Endothelial cell of umbilical vein (primary cell): ENCODE measurements at regions of chr2 and their contacts with region 1.

Region 1: GRCh38 chr2:224401641-224402342 is at the start of gene FAM124B:
- DNase-seq: peak; percentile 99
- H3K4me3 ChIP-seq: peak within 1 kb of the TSS; percentile 33 to 90 (median 75)
- H3K27ac ChIP-seq: peak within 1 kb of the TSS; percentile 98
- H3K4me1 ChIP-seq: peaks cover 28% of the 10 kb centered on the region
- H3K27me3 ChIP-seq: no peaks in the 10 kb centered on the region
- CTCF ChIP-seq: no peak
- POLR2A ChIP-seq: peak; percentile 96
- total RNA-seq, gene FAM124B: 81.4 and 82.0 TPM in 2 replicates

Region 2: DNA sequence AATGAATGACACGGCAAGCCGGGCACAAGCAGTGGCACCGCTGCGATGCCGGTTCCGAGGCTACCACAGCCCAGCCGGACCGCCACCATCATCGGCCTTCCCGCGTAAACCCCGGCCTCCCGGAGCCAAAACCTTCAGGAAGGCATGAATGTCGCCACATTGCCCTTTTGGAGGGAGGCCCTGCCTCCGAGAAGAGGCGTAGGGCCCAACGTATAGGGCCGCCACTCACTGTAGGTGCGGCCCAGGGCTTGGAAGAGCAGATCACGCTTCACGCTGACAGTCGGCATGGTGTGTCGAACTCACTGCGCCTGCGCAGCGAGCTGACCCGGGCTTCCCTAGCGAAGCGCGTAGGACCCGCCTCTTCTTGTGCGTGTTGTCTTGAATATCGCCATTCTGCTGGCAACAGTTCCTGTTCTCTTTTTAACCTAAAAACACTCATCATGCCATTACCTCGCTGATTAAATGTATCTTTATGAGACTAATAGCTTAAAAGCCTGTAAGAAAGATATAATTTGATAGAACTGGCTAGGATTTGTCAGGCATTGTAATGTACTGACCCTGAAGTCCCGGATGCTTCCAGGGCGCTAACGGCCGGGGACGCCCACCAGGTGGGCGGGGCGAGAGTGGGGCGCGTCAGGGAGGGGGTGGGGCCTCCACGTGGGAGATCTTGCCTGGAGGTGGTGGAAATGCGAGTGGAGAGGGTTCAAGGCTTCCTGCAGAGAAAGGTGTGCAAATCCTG is 1745.8 kb before region 1 on chr2 and contains the start of gene FARSB:
- CTCF ChIA-PET with region 1: no interaction called
- POLR2A ChIA-PET with region 1: no interaction called
- dilution Hi-C with region 1: no loop called
- intact Hi-C with region 1: loop called (anchors 10 kb)
- DNase-seq: peak; percentile 97
- H3K4me3 ChIP-seq: peak within 1 kb of the TSS; percentile 47 to 95 (median 92)
- H3K27ac ChIP-seq: peak within 1 kb of the TSS; percentile 99
- H3K4me1 ChIP-seq: peaks cover 34% of the 10 kb centered on the region
- H3K27me3 ChIP-seq: no peaks in the 10 kb centered on the region
- CTCF ChIP-seq: no peak
- POLR2A ChIP-seq: peak; percentile 64
- total RNA-seq, gene FARSB: 27.2 and 29.4 TPM in 2 replicates

Region 3: DNA sequence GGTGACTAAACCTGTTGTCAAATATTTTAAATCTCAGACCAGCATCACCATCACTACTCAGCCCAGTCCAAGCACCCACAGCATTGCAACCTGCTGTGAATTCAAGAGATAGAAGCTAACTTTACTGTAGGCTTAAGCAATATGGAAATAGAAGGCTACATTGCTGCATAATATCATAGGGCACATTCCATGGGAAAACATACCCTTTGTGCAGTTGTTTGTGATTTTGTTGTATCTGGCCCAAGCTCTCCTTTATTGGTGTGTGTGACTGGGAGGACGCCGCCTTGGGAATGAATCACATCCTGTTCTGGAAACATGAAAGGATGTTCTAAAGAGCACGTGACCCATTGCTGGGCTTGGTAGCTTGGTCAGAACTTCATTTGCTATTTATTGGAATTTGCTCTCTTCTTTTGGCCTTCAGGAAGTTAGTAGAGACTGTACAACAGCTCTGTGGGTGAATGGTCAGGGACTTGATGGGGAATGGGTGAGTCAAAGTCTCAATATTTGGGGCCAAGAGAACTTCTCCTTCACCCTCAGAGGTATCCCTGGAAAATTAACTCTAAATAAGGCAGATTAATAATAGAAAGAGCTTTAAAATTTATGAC is 255.9 kb before region 1 on chr2:
- CTCF ChIA-PET with region 1: no interaction called
- POLR2A ChIA-PET with region 1: no interaction called
- dilution Hi-C with region 1: no loop called
- intact Hi-C with region 1: loop called (anchors 10 kb)
- DNase-seq: peak; percentile 94
- H3K4me3 ChIP-seq: no peak overlapping the region
- H3K27ac ChIP-seq: peak overlapping the region; percentile 70
- H3K4me1 ChIP-seq: peaks cover 39% of the 10 kb centered on the region
- H3K27me3 ChIP-seq: peaks cover 2 to 3% of the 10 kb centered on the region in 2 experiments
- CTCF ChIP-seq: no peak
- POLR2A ChIP-seq: no peak

Region 4: DNA sequence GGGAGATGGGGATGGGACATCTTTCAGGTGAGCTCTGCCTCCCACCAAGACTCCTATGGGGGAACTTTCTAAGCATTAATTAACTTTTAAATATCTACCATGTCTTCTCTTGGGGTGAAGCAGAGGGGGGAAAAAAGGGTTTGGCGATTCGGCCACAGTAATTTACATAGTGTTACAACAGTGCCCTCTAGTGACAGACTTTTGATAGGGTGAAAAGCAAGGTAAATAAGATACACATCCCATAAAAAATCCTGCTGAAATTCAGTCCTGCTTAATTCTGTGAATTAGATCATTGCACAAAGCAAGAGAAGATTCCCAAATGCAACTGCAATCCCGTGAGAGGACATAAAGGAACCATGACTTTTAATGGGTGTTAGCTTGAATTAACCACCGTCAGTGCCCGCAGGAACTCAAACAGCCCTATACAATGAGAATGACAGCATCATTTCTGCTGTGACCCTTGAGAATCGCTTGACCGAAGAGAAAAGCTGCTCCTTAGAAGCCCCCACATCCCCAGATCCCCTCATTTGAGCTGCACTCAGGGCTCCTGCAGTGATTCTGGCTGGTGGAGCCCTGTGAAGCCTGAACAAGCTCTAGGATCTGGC is 32.7 kb before region 1 on chr2:
- CTCF ChIA-PET with region 1: interaction called, 21 read pairs
- POLR2A ChIA-PET with region 1: no interaction called
- dilution Hi-C with region 1: no loop called
- intact Hi-C with region 1: no loop called
- DNase-seq: no peak
- H3K4me3 ChIP-seq: no peak overlapping the region
- H3K27ac ChIP-seq: no peak overlapping the region
- H3K4me1 ChIP-seq: no peaks in the 10 kb centered on the region
- H3K27me3 ChIP-seq: no peaks in the 10 kb centered on the region
- CTCF ChIP-seq: peak; percentile 49 to 50
- POLR2A ChIP-seq: no peak

Region 5: GRCh38 chr2:224449212-224450147 is 47.7 kb after region 1 on chr2:
- CTCF ChIA-PET with region 1: interaction called, 78 read pairs
- POLR2A ChIA-PET with region 1: interaction called, 3 read pairs
- dilution Hi-C with region 1: no loop called
- intact Hi-C with region 1: loop called (anchors 1 kb)
- DNase-seq: peak; percentile 85
- H3K4me3 ChIP-seq: no peak overlapping the region
- H3K27ac ChIP-seq: no peak overlapping the region
- H3K4me1 ChIP-seq: peaks cover 8% of the 10 kb centered on the region
- H3K27me3 ChIP-seq: no peaks in the 10 kb centered on the region
- CTCF ChIP-seq: peak; percentile 52 to 59
- POLR2A ChIP-seq: no peak

Region 6: DNA sequence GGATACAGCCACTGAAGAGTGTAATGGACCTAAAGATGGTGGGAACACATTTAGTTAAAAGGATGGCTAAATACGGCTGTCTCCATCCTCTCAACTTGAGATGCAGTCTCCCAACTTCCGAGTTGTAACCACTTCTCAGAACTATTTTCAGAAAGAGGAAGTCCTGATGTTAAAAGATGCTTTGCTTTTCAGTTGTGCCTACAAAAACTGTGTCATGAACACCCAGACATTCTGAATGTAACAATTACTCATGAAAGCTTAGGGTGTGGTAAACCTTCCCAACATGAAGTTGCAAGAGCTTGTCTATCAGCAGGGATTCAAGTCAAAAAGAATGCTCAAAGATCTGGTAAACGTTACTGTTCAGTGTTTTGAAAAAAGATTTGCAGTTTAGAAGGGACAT is 492.6 kb after region 1 on chr2:
- CTCF ChIA-PET with region 1: no interaction called
- POLR2A ChIA-PET with region 1: no interaction called
- dilution Hi-C with region 1: no loop called
- intact Hi-C with region 1: no loop called
- DNase-seq: no peak
- H3K4me3 ChIP-seq: no peak overlapping the region
- H3K27ac ChIP-seq: no peak overlapping the region
- H3K4me1 ChIP-seq: no peaks in the 10 kb centered on the region
- H3K27me3 ChIP-seq: no peaks in the 10 kb centered on the region
- CTCF ChIP-seq: no peak
- POLR2A ChIP-seq: no peak

Region 7: GRCh38 chr2:224946895-224947294 is 545.1 kb after region 1 on chr2:
- CTCF ChIA-PET with region 1: no interaction called
- POLR2A ChIA-PET with region 1: no interaction called
- dilution Hi-C with region 1: no loop called
- intact Hi-C with region 1: loop called (anchors 2 kb)
- DNase-seq: peak; percentile 84
- H3K4me3 ChIP-seq: peak overlapping the region; percentile 13 to 95 (median 93)
- H3K27ac ChIP-seq: peak overlapping the region; percentile 99
- H3K4me1 ChIP-seq: peaks cover 61% of the 10 kb centered on the region
- H3K27me3 ChIP-seq: no peaks in the 10 kb centered on the region
- CTCF ChIP-seq: no peak
- POLR2A ChIP-seq: peak; percentile 71